PC-9 (cell line): ENCODE measurements at regions of chr7 and their contacts with region 1.

Region 1: DNA sequence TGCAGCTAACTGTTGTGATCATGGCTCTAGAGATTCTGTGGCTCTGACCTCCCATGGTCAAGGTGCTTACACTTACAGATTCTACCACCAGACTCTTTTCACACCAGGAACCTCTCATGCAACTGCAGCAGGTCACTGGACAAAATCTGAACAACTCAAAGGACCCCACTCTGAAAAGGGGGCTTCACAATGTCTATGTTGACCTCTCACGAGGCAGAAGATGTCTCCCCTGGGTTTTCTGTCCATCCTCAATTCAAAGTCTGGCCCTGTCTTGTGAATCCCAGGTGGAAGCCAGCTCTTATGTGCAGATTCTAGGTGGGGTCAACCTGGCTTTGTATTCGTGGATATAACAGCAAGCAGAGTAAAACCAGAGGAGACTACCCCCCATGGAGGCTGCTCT is 118.6 kb upstream of the ZNF479 start:
- DNase-seq: no peak
- H3K4me3 ChIP-seq: no peak overlapping the region
- H3K27ac ChIP-seq: no peak overlapping the region
- H3K4me1 ChIP-seq: no peaks in the 10 kb centered on the region
- H3K27me3 ChIP-seq: no peaks in the 10 kb centered on the region
- CTCF ChIP-seq: no peak

Region 2: GRCh38 chr7:57216340-57216739 is 34.5 kb before region 1 on chr7:
- CTCF ChIA-PET with region 1: no interaction called
- POLR2A ChIA-PET with region 1: interaction called, 11 read pairs
- intact Hi-C with region 1: no loop called
- DNase-seq: no peak
- H3K4me3 ChIP-seq: no peak overlapping the region
- H3K27ac ChIP-seq: no peak overlapping the region
- H3K4me1 ChIP-seq: no peaks in the 10 kb centered on the region
- H3K27me3 ChIP-seq: peaks cover 7% of the 10 kb centered on the region; the same call in 1 of the 2 replicates
- CTCF ChIP-seq: no peak

Region 3: GRCh38 chr7:57305192-57305748 is 54.5 kb after region 1 on chr7:
- CTCF ChIA-PET with region 1: no interaction called
- POLR2A ChIA-PET with region 1: no interaction called
- intact Hi-C with region 1: no loop called
- DNase-seq: peak in 1 of 2 experiments; percentile 2
- H3K4me3 ChIP-seq: no peak overlapping the region
- H3K27ac ChIP-seq: no peak overlapping the region
- H3K4me1 ChIP-seq: no peaks in the 10 kb centered on the region
- H3K27me3 ChIP-seq: no peaks in the 10 kb centered on the region
- CTCF ChIP-seq: peak; percentile 72

Region 4: GRCh38 chr7:57375783-57376182 is 125.0 kb after region 1 on chr7:
- CTCF ChIA-PET with region 1: no interaction called
- POLR2A ChIA-PET with region 1: no interaction called
- intact Hi-C with region 1: no loop called
- DNase-seq: no peak
- H3K4me3 ChIP-seq: no peak overlapping the region
- H3K27ac ChIP-seq: no peak overlapping the region
- H3K4me1 ChIP-seq: no peaks in the 10 kb centered on the region
- H3K27me3 ChIP-seq: no peaks in the 10 kb centered on the region
- CTCF ChIP-seq: no peak

Region 5: DNA sequence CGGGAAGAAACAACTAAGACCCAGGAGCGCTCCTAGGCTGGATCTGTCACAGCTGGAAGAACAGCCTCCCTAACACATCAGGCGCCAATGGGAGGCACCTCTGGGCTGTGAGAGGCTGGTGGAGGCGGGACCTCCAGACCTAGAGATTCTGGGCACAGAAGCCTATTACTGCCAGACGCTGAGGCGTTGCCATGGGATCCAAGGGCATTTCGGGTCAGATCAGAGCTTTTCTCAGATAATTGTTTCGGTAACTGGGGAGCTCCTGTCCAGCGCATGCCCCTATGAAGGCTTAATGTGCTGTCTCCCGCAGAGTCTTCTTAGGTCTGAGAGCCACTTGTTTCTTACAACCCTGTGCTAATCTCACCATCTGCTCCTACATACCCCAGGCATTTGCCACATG is 538.3 kb after region 1 on chr7:
- CTCF ChIA-PET with region 1: no interaction called
- POLR2A ChIA-PET with region 1: no interaction called
- intact Hi-C with region 1: no loop called
- DNase-seq: no peak
- H3K4me3 ChIP-seq: no peak overlapping the region
- H3K27ac ChIP-seq: no peak overlapping the region
- H3K4me1 ChIP-seq: no peaks in the 10 kb centered on the region
- H3K27me3 ChIP-seq: peaks cover 3% of the 10 kb centered on the region; the same call in 1 of the 2 replicates
- CTCF ChIP-seq: no peak